ENCODE measurements at regions of chr3 and their contacts with region 1.

Region 1: GRCh38 chr3:156509189-156510174 is 45.4 kb downstream of the SSR3 start:
- DNase-seq: peak; percentile 63
- H3K4me3 ChIP-seq: no peak overlapping the region; a peak in 1 of 4 replicates
- H3K27ac ChIP-seq: peak overlapping the region in 1 of 2 experiments; percentile 66; a peak in 2 of 4 replicates
- H3K4me1 ChIP-seq: peaks cover 5 to 9% of the 10 kb centered on the region in 2 experiments; a peak in 3 of 4 replicates
- H3K27me3 ChIP-seq: no peaks in the 10 kb centered on the region
- CTCF ChIP-seq: peak; percentile 74
- EP300 ChIP-seq: no peak
- RAD21 ChIP-seq: peak; percentile 85

Region 2: DNA sequence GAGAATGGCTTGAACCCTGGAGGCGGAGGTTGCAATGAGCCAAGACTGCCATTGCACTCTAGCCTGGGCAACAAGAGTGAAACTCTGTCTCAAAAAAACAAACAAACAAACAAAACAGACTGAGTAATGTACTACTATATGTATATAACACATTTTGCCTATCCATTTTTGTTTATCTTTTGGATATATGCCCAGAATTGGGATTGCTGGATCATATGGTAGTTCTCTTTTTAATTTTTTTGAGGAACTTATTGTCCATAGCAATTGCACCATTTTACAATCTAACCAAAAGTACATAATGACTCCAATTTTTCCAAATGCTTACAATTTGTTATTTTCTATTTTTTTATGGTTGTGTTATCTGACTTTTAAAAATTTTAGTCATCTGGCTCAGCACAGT is 591.7 kb before region 1 on chr3:
- CTCF ChIA-PET with region 1: no interaction called
- POLR2A ChIA-PET with region 1: no interaction called
- DNase-seq: no peak
- H3K4me3 ChIP-seq: no peak overlapping the region
- H3K27ac ChIP-seq: no peak overlapping the region
- H3K4me1 ChIP-seq: 0 out of 4 replicates have a peak, but pooled peaks cover 0 to under 1% of the 10 kb centered on the region in 2 experiments
- H3K27me3 ChIP-seq: no peaks in the 10 kb centered on the region
- CTCF ChIP-seq: no peak
- EP300 ChIP-seq: no peak
- RAD21 ChIP-seq: no peak

Region 3: DNA sequence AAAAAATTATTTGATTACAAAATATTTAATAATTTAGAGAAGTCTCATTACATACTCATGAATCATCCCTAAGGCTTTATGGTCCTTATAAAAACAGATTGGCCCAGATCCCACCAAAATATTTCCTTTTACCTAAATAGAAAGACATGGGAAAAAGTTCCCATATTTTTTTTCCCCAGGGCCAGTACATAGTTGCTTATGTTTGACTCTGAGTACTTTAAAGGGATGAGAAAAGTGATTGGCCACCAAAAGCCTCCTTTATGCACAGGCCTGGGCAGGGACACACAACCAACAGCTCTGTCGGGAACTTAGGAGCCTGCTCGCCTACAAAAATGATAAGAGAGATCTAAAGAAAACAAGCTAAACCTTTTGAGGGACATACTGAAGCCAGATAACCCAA is 366.8 kb before region 1 on chr3:
- CTCF ChIA-PET with region 1: interaction called, 12 read pairs
- POLR2A ChIA-PET with region 1: no interaction called
- DNase-seq: no peak
- H3K4me3 ChIP-seq: no peak overlapping the region
- H3K27ac ChIP-seq: peak overlapping the region in 1 of 2 experiments; percentile 40; a peak in 1 of 4 replicates
- H3K4me1 ChIP-seq: no peaks in the 10 kb centered on the region; a peak in 1 of 4 replicates
- H3K27me3 ChIP-seq: no peaks in the 10 kb centered on the region
- CTCF ChIP-seq: no peak
- EP300 ChIP-seq: no peak
- RAD21 ChIP-seq: no peak

Region 4: DNA sequence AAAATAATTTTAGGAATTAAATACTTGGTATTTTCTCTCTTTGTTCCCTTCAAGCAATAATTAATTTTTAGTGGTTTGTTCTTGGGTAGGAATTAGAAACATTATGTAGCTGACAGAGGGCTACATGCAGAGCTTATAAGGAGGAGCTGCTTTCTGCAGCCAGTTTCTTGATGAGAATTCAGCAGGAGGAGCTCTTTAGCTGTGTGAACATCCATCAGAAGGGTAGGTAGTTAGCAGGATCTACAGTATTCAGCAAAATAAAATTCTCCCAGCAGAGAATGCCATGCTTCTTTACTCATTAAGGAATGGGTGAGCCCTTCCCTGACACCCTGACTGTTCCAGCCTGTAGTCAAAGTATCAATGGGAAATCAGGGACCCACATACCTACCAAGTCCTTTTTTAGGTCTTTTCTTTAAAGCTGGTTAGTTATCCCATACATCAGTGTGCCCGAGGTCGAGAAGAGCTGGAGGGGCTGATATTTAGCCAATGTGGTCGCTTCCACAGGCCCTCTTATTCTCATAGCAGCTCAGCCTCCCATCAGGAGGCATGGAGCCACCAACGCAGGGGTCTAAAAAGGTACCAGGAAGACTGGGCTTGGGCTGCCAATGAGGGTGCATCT is 335.1 kb before region 1 on chr3:
- CTCF ChIA-PET with region 1: interaction called, 55 read pairs
- POLR2A ChIA-PET with region 1: no interaction called
- DNase-seq: peak; percentile 33
- H3K4me3 ChIP-seq: no peak overlapping the region
- H3K27ac ChIP-seq: peak overlapping the region; percentile 17 to 18; a peak in 2 of 4 replicates
- H3K4me1 ChIP-seq: peaks cover 9 to 10% of the 10 kb centered on the region in 2 experiments; a peak in 3 of 4 replicates
- H3K27me3 ChIP-seq: no peaks in the 10 kb centered on the region
- CTCF ChIP-seq: peak; percentile 78
- EP300 ChIP-seq: no peak
- RAD21 ChIP-seq: peak; percentile 82

Region 5: GRCh38 chr3:156433138-156433537 is 76.3 kb before region 1 on chr3:
- CTCF ChIA-PET with region 1: no interaction called
- POLR2A ChIA-PET with region 1: no interaction called
- DNase-seq: no peak
- H3K4me3 ChIP-seq: no peak overlapping the region
- H3K27ac ChIP-seq: peak overlapping the region; percentile 5 to 17; a peak in 3 of 4 replicates
- H3K4me1 ChIP-seq: peaks cover 8 to 24% of the 10 kb centered on the region in 2 experiments; a peak in 3 of 4 replicates
- H3K27me3 ChIP-seq: no peaks in the 10 kb centered on the region
- CTCF ChIP-seq: no peak
- EP300 ChIP-seq: no peak
- RAD21 ChIP-seq: no peak

Region 6: DNA sequence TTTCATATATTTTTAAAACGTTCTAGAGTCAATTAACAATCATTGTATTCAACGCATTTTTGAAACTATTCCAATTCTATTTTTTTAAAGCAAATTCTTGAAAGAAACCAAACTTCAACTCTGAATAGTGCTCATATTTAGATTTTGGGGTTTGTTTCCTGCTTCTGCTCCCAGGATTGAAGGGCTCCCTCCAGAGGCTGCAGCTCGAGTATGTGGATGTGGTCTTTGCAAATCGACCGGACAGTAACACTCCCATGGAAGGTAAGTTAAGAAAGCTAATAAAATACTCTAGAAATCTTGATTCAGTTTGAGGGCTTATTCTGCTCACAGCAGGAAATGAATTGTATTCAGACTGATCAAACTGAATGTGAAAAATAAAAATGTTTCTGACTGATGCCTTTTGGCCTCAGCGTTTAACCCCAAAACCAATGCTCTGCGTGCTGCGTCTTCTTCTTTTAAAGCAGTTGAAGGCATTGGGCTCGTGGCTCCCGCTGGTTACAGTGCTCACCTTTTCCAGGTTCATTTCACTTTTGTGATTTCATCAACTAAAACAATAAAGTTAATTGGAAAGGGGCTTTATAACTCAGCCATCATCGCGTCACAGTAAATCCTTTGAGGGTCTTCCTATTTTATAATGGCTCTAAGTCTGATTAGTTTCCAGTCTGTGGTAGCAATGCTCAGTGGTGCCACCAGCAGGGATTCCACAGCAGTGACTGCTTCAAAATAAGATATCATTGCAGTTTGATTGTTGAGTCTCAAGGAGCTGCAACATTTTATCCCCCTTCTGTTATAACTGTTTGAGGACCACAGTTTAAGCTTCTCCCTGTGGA is 34.7 kb before region 1 on chr3:
- CTCF ChIA-PET with region 1: interaction called, 14 read pairs
- POLR2A ChIA-PET with region 1: no interaction called
- DNase-seq: no peak
- H3K4me3 ChIP-seq: no peak overlapping the region; a peak in 1 of 4 replicates
- H3K27ac ChIP-seq: peak overlapping the region; percentile 5 to 50; a peak in 1 of 4 replicates
- H3K4me1 ChIP-seq: peaks cover 4 to 25% of the 10 kb centered on the region in 2 experiments; a peak in 3 of 4 replicates
- H3K27me3 ChIP-seq: no peaks in the 10 kb centered on the region
- CTCF ChIP-seq: peak; percentile 60
- EP300 ChIP-seq: no peak
- RAD21 ChIP-seq: peak; percentile 46

Region 7: DNA sequence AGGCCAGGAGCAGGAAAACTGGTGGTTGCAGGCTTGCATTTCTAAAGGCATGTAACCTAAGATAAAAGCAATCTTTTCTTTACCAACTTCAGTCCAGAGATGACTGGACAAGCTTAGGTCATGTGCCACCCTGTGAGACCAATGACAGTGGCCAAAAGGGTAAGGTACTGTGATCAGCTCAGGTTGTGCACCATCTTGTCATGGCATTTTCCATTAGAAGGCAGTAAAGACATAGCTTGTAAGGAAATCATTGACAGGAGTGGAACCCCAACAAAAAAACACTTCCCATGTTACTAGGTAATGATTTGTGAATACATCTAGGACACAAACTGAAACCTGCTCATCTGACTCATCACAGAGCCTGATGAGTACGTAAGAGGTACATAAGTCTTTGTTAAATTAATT is 10.3 kb after region 1 on chr3:
- CTCF ChIA-PET with region 1: interaction called, 12 read pairs
- POLR2A ChIA-PET with region 1: no interaction called
- DNase-seq: no peak
- H3K4me3 ChIP-seq: no peak overlapping the region
- H3K27ac ChIP-seq: no peak overlapping the region
- H3K4me1 ChIP-seq: peaks cover 7% of the 10 kb centered on the region in 2 experiments; a peak in 3 of 4 replicates
- H3K27me3 ChIP-seq: no peaks in the 10 kb centered on the region
- CTCF ChIP-seq: no peak
- EP300 ChIP-seq: no peak
- RAD21 ChIP-seq: no peak

Region 8: DNA sequence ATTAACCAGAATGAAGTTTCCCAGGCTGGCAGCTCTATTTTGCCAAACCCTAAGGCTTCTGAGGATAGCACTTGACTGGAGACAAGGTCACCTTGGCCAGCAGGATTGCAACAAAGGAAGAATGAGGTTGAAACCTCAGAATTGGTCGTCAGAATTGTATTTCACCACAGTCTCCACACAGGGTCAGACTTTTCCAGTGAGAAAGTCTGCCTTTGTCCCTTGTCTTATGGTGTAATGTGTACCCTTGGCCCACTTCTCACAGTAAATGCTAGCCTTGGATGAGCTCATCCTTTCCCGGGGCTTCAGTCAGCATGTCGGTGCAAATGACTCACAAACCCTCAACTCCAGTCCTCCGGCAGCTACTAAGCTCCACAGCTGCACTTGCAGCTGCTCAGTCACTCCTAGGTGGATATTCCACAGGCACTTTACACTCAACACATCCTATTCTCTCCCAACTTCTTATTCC is 25.7 kb after region 1 on chr3:
- CTCF ChIA-PET with region 1: interaction called, 13 read pairs
- POLR2A ChIA-PET with region 1: no interaction called
- DNase-seq: no peak
- H3K4me3 ChIP-seq: no peak overlapping the region
- H3K27ac ChIP-seq: peak overlapping the region; percentile 62 to 93
- H3K4me1 ChIP-seq: peaks cover 0 to 19% of the 10 kb centered on the region in 2 experiments; a peak in 2 of 4 replicates
- H3K27me3 ChIP-seq: no peaks in the 10 kb centered on the region
- CTCF ChIP-seq: peak; percentile 57
- EP300 ChIP-seq: no peak
- RAD21 ChIP-seq: peak; percentile 41

Measured in SK-N-SH (cell line).